Psoas muscle (tissue), 8 donors: ENCODE measurements at regions of chr6 and their contacts with region 1.

Region 1: GRCh38 chr6:16038938-16039337 is 89.9 kb upstream of the MYLIP start:
- DNase-seq: no peak
- ATAC-seq: no peak
- H3K4me3 ChIP-seq: no peak overlapping the region
- H3K27ac ChIP-seq: no peak overlapping the region
- H3K4me1 ChIP-seq: no peaks in the 10 kb centered on the region
- H3K27me3 ChIP-seq: no peaks in the 10 kb centered on the region
- CTCF ChIP-seq: no peak

Region 2: DNA sequence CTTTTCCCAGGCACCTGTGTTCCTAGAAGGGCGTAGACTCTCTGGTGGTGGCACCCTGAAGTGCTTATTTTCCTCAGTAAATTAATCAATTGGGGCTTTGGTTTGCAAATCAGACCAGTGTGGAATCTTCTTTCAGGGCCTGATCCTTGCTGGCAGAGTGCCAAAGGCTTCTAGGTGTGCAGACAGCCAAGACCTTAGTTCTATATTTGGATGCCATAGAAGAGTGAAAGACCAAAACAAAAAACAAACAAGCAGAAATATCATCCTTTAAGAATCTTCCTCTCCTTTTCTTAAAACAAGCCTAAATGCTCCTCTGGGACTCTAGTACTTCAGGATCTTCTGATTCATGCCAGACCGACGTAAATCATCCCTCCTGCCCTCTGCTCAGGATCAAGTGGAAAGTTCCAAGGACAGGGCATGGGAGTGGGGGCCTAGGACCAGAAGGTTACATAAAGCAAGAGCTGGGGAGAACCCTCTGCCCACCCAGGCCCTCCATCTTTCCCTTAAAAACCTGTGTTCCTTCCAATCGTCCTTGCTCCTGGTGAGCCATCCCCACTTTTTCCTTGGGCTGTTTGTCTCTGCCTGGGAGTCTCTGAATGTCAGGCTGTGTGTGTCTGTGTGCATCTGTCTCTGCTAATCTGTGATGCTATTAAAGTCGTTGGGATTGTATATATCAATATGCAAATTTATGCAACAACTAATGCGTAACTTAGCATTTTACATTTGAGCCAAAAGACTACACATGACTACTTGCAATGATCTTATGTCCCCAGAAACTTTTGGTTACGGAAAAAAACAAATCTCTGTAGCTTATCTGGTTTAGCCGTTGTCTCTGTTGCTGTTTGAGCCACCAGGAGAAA is 19.5 kb after region 1 on chr6:
- intact Hi-C with region 1: loop called in 1 of 2 experiments (anchors 1 kb)
- DNase-seq: no peak
- ATAC-seq: peak in 1 of 4 donors; percentile 60
- H3K4me3 ChIP-seq: no peak overlapping the region
- H3K27ac ChIP-seq: peak overlapping the region; percentile 50
- H3K4me1 ChIP-seq: peaks cover 17% of the 10 kb centered on the region
- H3K27me3 ChIP-seq: no peaks in the 10 kb centered on the region
- CTCF ChIP-seq: no peak

Region 3: GRCh38 chr6:16154904-16155303 is 116.0 kb after region 1 on chr6:
- intact Hi-C with region 1: no loop called
- DNase-seq: peak; percentile 66 to 82
- ATAC-seq: peak; percentile 89 to 94 (median 90)
- H3K4me3 ChIP-seq: no peak overlapping the region
- H3K27ac ChIP-seq: peak overlapping the region; percentile 58
- H3K4me1 ChIP-seq: peaks cover 25% of the 10 kb centered on the region
- H3K27me3 ChIP-seq: no peaks in the 10 kb centered on the region
- CTCF ChIP-seq: no peak